GM10248 (cell line): ENCODE measurements at regions of chr2 and their contacts with region 1.

Region 1: DNA sequence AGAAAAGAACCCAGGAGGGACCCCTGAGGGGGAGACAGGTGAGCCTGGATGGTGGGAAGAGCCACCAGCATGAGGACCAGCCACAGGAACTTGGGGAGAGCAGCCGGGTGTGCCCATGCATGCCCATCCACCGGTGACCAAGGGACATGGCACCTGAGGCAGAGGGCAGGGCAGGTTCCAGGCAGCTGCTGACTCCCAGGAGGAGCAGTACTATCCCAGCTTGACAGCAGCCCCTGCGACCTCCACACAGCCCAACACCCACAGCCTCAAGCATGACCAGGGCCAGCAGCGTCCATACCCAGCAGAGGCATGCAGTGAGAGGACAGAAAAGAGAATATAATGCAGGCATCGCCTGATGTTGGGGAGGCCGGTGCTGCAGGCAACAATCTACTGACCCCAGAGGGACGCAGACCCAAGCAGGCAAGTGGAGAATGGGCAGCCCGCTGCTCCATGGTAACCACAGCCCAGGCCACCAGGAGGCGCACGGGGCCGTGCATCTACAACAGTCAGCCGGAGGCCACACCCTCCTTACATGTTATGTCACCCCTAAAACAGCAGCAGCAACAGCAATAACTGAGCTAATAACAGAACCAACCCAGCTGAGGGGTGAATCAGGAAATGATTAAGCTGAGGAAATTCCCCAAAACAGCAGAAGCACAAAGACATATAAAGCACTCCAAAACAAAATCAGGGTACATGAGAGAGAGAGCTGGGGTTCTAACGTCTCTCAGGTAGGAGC is 44.1 kb downstream of the ANKMY1 start:
- DNase-seq: peak; percentile 94
- CTCF ChIP-seq: peak; percentile 94

Region 2: DNA sequence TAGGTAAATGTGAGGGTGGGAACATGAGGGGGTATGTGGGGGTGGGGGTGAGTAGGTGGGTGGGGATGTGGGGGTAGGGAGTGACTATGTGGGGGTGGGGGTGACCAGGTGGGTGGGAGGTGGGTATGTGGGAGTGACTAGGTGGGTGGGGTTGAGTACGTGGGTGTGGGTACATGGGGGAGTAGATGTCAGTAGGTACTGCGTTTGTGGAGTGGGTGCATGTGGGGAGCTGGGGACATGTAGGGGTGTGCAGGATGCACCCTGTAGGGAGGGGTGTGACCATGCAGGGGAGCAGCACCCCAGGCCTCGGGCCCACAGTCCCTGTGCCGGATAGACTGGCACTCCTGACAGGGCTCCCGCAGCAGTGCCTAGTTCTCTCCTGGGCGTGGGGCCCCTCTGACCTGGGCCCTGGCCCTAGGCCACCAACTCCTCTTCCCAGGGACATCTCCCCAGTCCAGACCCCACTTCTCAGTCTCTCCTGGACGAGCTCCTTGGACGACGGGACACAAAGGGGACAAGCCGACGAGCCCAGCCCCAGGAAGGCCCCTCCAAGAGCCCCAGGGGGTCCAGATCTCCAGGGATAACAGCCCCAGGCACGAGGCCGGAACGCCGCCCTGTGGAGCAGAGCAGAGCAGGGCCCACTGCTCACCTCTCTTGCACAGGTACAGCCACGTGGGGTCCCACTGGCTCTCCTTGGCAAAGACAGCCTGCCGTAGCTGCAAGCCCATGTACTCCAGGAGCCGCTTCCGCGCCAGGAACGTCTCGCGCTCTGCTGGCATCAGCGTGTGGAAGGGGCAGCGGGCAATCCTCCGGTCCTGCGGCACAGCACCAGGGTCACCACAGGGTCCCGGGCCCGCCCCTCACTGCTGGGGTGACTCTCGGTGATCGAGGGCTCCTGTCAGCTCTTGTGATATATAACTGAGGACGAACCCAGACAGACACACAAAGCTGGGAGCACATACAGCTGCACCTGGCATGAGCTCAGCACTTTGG is 14.1 kb before region 1 on chr2:
- CTCF ChIA-PET with region 1: interaction called, 35 read pairs
- POLR2A ChIA-PET with region 1: no interaction called
- DNase-seq: no peak
- CTCF ChIP-seq: no peak

Region 3: GRCh38 chr2:240530181-240530580 is 16.5 kb after region 1 on chr2:
- CTCF ChIA-PET with region 1: interaction called, 14 read pairs
- POLR2A ChIA-PET with region 1: no interaction called
- DNase-seq: no peak
- CTCF ChIP-seq: no peak

Region 4: DNA sequence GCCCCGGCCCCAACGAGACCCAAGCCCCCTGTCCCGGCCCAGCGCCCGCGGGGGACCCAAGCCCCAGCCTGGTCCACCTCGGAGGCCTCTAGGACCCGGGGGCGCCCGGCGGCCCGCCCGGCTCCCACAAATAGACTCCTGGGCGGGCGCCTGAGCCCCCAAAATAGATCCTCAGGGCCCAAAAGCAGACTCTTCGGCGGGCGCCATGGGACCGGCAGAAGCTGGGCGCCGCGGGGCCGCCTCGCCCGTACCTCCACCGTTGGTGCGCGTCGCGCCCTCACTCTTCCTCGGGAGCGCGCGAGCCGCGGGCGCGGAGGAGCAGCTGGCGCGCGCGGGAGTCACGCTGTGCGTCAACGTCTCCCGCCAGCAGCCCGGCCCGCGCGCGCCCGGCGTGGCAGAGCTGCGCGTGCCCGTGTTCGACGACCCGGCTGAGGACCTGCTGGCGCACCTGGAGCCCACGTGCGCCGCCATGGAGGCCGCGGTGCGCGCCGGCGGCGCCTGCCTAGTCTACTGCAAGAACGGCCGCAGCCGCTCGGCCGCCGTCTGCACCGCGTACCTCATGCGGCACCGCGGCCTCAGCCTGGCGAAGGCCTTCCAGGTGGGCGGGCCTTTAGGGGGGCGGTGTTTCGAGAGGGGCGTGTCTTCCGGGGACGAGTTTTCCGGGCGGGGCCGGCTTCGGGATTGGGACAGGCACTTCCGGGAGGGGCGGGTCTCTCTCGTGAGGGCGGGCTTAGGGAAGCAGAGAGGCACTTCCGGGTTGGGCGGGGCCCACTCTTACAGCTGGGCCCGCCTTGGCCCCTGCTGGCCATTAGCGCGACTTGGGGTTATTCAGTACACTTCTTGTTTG is 47.0 kb after region 1 on chr2:
- CTCF ChIA-PET with region 1: interaction called, 27 read pairs
- POLR2A ChIA-PET with region 1: interaction called, 3 read pairs
- DNase-seq: peak; percentile 96
- CTCF ChIP-seq: no peak

Region 5: DNA sequence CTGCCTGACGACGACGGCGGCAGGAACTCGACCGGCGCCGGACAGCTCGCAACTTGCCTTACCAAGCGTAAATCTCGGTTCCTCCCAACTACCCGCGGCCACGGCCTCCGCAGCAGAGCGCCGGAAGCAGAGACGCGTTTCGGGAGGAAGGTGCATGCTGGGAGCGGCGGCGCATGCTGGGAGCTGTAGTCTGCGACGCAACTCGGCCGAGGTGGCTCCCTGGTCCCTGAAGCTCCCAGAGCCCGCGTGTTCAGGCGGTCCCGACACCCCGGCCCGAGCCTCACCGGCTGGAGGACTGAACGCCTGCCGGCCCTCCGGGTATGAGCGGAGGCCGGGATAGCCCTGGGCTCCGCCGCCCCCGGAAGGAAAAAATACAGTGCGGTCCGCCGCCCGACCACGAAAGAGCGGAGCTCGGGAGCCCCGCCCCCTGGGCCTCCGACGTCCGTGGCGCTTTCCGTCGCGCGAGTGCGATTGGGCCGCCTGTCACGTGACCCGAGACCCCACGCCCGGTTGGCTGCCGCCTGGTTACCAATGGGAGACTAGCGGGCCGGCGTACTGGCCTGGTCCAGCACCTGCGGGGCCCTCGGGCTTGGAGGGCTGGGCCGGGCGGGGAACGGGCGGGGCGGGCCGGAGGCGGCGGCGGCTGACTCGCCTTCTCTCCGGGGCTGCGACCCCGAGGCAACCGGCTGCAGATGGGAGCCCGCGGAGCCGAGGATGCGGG is 72.6 kb after region 1 on chr2 and contains the start of gene CAPN10:
- CTCF ChIA-PET with region 1: interaction called, 45 read pairs
- POLR2A ChIA-PET with region 1: interaction called, 6 read pairs
- DNase-seq: peak; percentile 95
- CTCF ChIP-seq: no peak

Region 6: GRCh38 chr2:240672701-240673190 is 159.0 kb after region 1 on chr2:
- CTCF ChIA-PET with region 1: interaction called, 10 read pairs
- POLR2A ChIA-PET with region 1: no interaction called
- DNase-seq: no peak
- CTCF ChIP-seq: no peak